Activated CD4-positive, alpha-beta T cell treated with anti-CD3 and anti-CD28 coated beads for 36 hours (primary cell): ENCODE measurements at regions of chr22 and their contacts with region 1.

Region 1: DNA sequence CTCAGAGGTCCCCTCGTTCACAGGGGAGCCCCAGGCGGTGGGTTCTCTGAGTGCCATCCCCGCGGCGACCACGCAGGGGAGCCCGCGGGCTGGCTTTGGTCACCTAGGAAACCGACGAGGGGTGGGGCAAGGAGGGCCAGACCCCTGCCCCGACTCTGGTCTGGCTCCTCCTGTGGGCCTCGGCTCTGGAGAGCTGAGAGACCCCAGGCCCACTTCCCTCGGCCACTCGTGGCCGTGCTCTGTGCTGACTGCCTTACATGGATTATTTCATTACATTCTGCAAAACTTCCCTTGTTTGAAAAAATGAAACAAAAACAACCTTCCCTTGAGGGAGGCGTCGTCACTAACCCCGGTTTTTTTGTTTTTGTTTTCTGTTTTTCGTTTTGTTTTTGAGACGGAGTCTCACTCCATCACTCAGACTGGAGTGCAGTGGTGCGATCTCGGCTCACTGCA is 15.1 kb upstream of the CYTH4 start:
- DNase-seq: peak; percentile 84
- ATAC-seq: peak; percentile 92
- H3K4me3 Mint-ChIP-seq: peak overlapping the region; percentile 79
- H3K27ac Mint-ChIP-seq: peak overlapping the region; percentile 95
- H3K4me1 Mint-ChIP-seq: peaks cover 30% of the 10 kb centered on the region
- H3K27me3 Mint-ChIP-seq: no peaks in the 10 kb centered on the region

Region 2: DNA sequence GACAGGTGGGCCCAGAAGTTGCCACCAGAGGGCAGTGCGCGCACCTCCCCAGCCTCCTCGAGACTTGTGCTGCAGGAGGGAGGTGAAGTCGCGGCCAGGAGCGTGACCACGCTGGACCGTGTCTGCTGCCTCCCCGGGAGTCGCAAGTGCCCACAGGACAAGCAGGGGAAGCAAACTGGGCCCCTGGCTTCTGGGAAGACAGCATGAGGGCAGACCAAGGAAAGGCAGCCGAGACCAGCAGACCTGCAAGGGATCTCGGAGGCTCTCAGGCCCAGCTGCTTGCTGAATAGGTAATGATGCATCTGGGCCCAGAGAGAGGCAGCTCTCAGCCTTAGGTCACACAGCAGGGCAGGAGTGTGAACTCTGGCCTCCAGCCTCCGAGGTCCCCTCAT is 100.5 kb before region 1 on chr22:
- CTCF ChIA-PET with region 1: no interaction called
- POLR2A ChIA-PET with region 1: no interaction called
- intact Hi-C with region 1: no loop called
- DNase-seq: peak; percentile 92
- ATAC-seq: peak; percentile 20
- H3K4me3 Mint-ChIP-seq: peak overlapping the region; percentile 53
- H3K27ac Mint-ChIP-seq: peak overlapping the region; percentile 82
- H3K4me1 Mint-ChIP-seq: peaks cover 71% of the 10 kb centered on the region
- H3K27me3 Mint-ChIP-seq: no peaks in the 10 kb centered on the region

Region 3: DNA sequence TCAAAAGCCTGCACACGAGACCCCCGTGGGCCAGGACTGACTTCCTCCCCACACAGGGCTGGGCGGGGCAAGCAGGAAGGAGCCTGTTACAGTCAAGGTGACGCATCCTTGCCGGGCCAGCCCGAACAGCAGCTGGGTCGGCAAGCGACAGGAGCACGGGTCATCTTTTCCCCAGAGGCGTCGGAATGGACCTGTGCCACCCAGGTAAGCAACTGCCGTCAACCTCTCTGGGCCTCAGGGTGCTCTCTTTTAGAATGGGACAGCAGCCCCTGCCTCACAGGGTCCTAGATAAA is 15.2 kb after region 1 on chr22 and contains the start of gene CYTH4:
- CTCF ChIA-PET with region 1: interaction called, 30 read pairs
- POLR2A ChIA-PET with region 1: interaction called, 3 read pairs
- intact Hi-C with region 1: loop called (anchors 1 to 2 kb)
- DNase-seq: peak; percentile 93
- ATAC-seq: peak; percentile 87
- H3K4me3 Mint-ChIP-seq: peak within 1 kb of the TSS; percentile 82
- H3K27ac Mint-ChIP-seq: peak within 1 kb of the TSS; percentile 98
- H3K4me1 Mint-ChIP-seq: peaks cover 60% of the 10 kb centered on the region
- H3K27me3 Mint-ChIP-seq: no peaks in the 10 kb centered on the region
- total RNA-seq, gene CYTH4: 33.1 to 42.8 TPM

Region 4: GRCh38 chr22:37428649-37429586 is 161.8 kb after region 1 on chr22:
- CTCF ChIA-PET with region 1: interaction called, 5 read pairs
- POLR2A ChIA-PET with region 1: no interaction called
- intact Hi-C with region 1: loop called (anchors 2 to 5 kb)
- DNase-seq: peak; percentile 74
- ATAC-seq: peak; percentile 21
- H3K4me3 Mint-ChIP-seq: no peak overlapping the region
- H3K27ac Mint-ChIP-seq: no peak overlapping the region
- H3K4me1 Mint-ChIP-seq: peaks cover 17% of the 10 kb centered on the region
- H3K27me3 Mint-ChIP-seq: peaks cover 50% of the 10 kb centered on the region

Region 5: DNA sequence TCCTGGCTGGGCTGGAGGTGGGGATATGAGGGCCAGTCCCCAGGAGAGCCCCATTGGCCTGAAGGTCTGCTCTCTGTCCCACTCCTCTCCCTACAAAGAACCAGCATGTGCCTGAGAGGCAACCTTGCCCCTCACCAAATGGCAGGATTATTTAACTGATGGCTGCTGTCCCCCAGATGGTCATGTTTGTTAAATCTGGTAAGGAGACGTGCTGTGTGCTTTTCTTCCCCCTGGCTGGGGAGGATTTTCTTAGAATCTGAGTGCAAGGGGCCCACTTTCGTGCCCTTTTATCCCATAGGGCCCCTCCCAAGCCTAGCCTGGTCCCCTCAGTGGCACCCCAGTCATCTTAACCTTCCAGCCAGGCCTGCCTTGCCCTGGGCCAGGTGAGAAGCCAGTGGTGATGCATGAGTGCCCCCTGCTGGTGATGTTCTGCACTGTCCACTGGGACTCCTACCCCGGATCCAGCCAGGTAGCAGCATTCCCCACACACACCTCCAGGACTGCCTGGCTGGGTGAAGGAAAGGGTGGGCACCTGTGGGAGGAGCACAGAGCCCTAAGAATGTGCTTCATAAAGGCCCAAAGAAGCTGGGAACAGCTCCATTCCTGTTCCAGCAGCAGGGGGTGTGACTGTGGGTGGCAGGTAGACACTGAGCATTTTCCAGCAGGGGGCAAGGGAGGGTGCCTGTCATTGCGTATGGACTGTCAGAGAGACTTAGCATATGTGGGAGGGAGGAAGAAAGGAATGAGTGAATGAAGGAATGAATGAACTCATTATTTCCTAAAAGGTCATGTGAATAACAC is 190.1 kb after region 1 on chr22:
- CTCF ChIA-PET with region 1: interaction called, 8 read pairs
- POLR2A ChIA-PET with region 1: no interaction called
- intact Hi-C with region 1: loop called (anchors 1 kb)
- DNase-seq: peak; percentile 93
- ATAC-seq: peak; percentile 99
- H3K4me3 Mint-ChIP-seq: no peak overlapping the region
- H3K27ac Mint-ChIP-seq: no peak overlapping the region
- H3K4me1 Mint-ChIP-seq: peaks cover 2% of the 10 kb centered on the region
- H3K27me3 Mint-ChIP-seq: no peaks in the 10 kb centered on the region

Region 6: DNA sequence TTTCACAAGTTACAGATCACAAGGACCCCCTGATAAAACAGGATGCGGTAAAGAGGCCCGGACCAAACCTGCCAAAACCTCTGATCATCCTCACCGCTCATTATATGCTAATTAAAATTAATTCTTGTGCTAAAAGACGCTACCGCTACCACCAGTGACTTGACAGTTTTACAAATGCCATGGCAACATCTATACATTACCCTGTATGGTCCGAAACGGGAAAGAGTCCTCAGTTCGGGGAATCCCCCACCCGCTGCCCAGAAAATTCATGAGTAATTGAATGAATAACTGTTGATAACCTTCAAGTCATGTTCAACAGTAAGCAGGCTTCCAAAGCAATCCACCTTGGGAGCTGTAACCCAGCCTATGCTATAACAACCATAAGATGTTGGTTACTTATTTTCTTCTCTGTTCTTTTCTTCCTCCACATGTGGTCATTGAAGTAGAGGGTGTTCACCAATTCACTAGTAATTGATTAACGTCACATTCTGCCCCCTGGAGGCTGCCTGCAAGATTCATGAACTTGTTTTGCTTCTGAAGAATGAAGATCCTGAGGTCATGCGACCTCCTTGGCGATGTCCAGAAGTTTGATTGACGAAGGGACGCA is 1850.5 kb after region 1 on chr22:
- CTCF ChIA-PET with region 1: no interaction called
- POLR2A ChIA-PET with region 1: no interaction called
- intact Hi-C with region 1: no loop called
- DNase-seq: peak; percentile 84
- ATAC-seq: peak; percentile 60
- H3K4me3 Mint-ChIP-seq: peak overlapping the region; percentile 10
- H3K27ac Mint-ChIP-seq: peak overlapping the region; percentile 86
- H3K4me1 Mint-ChIP-seq: peaks cover 54% of the 10 kb centered on the region
- H3K27me3 Mint-ChIP-seq: no peaks in the 10 kb centered on the region